Activated naive CD4-positive, alpha-beta T cell treated with anti-CD3 and anti-CD28 coated beads for 36 hours (primary cell): ENCODE measurements at regions of chr4 and their contacts with region 1.

Region 1: DNA sequence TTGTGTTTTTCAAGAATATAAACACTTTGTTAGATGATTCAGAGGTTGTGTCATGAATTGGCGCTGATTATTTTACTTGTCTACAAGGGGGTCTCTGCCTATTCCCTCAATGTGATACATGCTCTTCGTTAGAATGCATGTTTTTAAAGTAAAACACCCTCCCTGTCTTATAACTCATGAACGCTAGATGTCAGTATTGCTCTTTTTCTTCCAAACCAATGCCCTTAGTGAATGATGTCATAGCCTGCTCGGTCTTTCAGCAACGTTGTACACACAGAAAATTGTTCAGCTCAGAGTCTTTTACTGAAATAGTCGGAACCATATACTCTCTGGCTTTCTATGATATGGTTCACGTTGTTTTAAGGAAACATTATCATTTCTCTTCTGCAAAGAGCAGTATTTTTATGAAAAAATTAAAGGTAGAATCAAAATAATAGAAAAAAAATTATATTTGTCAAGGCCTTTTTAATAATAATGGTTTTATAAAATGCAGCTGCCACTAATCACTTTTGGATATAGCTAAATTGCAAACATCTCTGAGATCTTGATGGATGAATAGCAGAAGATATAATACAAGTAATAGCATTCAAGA is 292.9 kb downstream of the TLL1 start:
- DNase-seq: peak; percentile 8
- H3K4me3 Mint-ChIP-seq: no peak overlapping the region
- H3K27ac Mint-ChIP-seq: no peak overlapping the region
- H3K4me1 Mint-ChIP-seq: peaks cover 2% of the 10 kb centered on the region
- H3K27me3 Mint-ChIP-seq: no peaks in the 10 kb centered on the region

Region 2: DNA sequence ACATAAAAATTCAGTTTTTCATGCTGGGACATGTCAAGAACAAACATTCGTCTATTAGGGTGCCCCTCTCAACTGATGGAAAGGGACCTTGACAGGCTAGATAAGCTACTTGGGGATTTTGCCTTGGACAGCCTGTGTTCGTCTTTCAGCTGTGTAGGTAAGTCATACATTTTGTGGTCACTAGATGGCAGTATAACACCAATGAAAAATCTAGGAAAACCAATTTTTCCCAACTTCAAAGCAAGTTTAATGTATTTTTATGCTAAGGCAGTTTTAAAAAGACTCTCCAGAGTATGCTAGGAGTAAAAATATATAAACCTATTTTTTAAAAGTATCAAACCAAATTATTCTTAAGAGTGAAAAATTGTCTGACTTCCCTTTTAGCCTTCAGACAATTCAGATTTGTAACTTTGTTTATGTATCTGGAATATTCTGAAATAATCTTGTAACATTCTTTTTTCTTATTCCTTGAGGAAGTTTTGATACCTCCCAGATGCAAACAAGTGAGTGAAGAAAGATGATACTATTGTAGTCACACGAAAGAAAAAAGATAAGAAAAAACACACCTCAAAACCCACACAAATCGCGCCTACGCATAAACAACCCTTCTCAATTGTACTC is 628.8 kb before region 1 on chr4:
- CTCF ChIA-PET with region 1: no interaction called
- intact Hi-C with region 1: loop called (anchors 5 kb)
- DNase-seq: no peak
- H3K4me3 Mint-ChIP-seq: no peak overlapping the region
- H3K27ac Mint-ChIP-seq: no peak overlapping the region
- H3K4me1 Mint-ChIP-seq: no peaks in the 10 kb centered on the region
- H3K27me3 Mint-ChIP-seq: peaks cover 6% of the 10 kb centered on the region

Region 3: DNA sequence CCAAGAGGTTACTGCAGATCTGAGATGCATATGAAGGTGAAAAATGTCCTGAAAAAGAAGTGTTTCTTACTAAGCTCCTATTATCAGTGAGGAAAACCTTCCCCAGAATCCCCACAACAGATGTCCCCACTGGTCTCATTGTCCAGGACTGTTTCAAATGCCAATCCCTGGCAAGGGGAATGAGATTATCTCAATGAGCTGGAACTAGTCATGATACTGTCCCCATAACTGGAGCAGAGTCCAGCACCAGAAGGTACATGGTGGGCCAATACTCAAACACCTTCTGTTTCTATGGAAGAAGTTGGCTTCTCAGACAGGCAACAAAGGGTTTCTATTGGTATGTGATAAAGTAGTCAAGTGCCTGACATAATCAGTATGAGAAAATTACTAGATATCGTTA is 514.0 kb before region 1 on chr4:
- CTCF ChIA-PET with region 1: no interaction called
- intact Hi-C with region 1: no loop called
- DNase-seq: no peak
- H3K4me3 Mint-ChIP-seq: no peak overlapping the region
- H3K27ac Mint-ChIP-seq: no peak overlapping the region
- H3K4me1 Mint-ChIP-seq: no peaks in the 10 kb centered on the region
- H3K27me3 Mint-ChIP-seq: no peaks in the 10 kb centered on the region

Region 4: DNA sequence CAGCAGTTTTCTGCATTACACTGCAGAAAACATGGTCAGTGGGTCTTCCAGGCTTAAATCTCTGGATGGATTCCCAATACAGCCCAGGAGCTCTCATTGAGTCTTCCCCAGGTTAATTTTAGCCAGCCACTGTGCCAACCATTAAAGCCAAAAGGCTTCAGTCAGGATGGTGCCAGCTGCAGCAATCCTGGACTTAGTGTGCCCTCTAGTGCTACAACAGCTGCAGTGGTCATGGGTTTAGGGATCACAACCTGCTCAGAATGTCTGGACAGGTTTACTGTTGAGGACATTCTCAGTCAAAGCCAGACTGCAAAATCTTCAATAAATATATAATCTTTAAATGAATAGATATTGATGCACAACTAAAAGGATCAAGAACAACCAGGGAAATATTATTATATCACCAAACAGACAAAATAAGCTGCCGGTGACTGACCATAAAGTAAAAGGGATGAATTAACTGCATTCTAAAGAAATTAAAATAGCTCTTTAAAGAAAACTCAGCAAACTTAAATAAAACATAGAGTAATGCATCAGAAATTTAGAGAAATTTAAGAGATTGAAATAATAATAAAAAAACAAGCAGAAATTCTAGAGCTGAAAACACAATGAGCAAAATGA is 428.5 kb after region 1 on chr4:
- CTCF ChIA-PET with region 1: no interaction called
- intact Hi-C with region 1: loop called (anchors 2 kb)
- DNase-seq: peak; percentile 5
- H3K4me3 Mint-ChIP-seq: no peak overlapping the region
- H3K27ac Mint-ChIP-seq: no peak overlapping the region
- H3K4me1 Mint-ChIP-seq: no peaks in the 10 kb centered on the region
- H3K27me3 Mint-ChIP-seq: no peaks in the 10 kb centered on the region

Region 5: GRCh38 chr4:167622481-167623246 is 1456.7 kb after region 1 on chr4:
- CTCF ChIA-PET with region 1: no interaction called
- intact Hi-C with region 1: loop called (anchors 2 kb)
- DNase-seq: peak; percentile 45
- H3K4me3 Mint-ChIP-seq: no peak overlapping the region
- H3K27ac Mint-ChIP-seq: no peak overlapping the region
- H3K4me1 Mint-ChIP-seq: no peaks in the 10 kb centered on the region
- H3K27me3 Mint-ChIP-seq: no peaks in the 10 kb centered on the region

Region 6: GRCh38 chr4:168153596-168154440 is 1987.9 kb after region 1 on chr4:
- CTCF ChIA-PET with region 1: no interaction called
- intact Hi-C with region 1: loop called (anchors 1 kb)
- DNase-seq: peak; percentile 67
- H3K4me3 Mint-ChIP-seq: no peak overlapping the region
- H3K27ac Mint-ChIP-seq: no peak overlapping the region
- H3K4me1 Mint-ChIP-seq: peaks cover 5% of the 10 kb centered on the region
- H3K27me3 Mint-ChIP-seq: no peaks in the 10 kb centered on the region